Activated CD4-positive, alpha-beta memory T cell treated with anti-CD3 and anti-CD28 coated beads for 36 hours (primary cell): ENCODE measurements at regions of chr10 and their contacts with region 1.

Region 1: DNA sequence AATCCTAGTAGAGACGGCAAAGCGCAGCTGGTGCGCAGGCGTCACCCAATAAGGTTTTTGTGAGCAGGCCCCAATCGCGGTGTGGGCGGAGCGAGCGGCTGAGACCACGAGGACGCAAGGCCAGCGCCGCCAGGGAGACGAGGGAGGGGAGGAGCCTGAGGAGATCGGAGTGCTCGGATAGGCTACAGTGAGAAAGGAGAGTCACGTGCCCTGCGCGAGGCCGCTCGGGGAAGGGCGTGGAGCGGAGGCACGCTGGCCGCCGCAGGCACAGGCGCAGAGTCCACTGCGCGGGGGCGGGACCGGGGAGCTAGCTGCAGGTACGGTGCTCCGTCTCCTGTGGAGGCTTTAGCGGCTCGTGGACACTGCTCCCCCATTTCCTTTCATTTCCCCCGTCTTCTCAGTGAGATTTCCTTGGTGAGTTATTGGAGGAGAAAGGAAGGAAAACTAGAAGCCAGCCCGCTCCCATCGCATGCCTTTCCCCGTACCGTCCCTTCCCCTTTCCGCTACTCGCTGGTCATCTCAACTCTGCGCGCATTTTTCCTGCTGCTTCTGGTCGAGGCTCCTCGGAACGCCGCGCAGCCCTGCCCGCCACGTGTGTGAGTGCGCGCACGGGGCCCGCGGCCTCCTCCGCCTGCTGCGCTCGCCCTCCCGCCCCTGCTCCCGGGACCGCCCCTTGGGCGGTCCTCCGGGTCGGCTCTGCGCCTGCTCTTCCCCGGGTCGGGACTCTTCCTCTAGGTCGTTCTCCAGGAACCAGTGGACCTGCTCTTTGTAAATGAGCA is at the start of gene THNSL1:
- DNase-seq: peak; percentile 99
- H3K4me3 Mint-ChIP-seq: peak within 1 kb of the TSS; percentile 94
- H3K27ac Mint-ChIP-seq: peak within 1 kb of the TSS; percentile 97
- H3K4me1 Mint-ChIP-seq: peaks cover 19% of the 10 kb centered on the region
- H3K27me3 Mint-ChIP-seq: no peaks in the 10 kb centered on the region
- total RNA-seq, gene THNSL1: 6.0 to 6.2 TPM

Region 2: DNA sequence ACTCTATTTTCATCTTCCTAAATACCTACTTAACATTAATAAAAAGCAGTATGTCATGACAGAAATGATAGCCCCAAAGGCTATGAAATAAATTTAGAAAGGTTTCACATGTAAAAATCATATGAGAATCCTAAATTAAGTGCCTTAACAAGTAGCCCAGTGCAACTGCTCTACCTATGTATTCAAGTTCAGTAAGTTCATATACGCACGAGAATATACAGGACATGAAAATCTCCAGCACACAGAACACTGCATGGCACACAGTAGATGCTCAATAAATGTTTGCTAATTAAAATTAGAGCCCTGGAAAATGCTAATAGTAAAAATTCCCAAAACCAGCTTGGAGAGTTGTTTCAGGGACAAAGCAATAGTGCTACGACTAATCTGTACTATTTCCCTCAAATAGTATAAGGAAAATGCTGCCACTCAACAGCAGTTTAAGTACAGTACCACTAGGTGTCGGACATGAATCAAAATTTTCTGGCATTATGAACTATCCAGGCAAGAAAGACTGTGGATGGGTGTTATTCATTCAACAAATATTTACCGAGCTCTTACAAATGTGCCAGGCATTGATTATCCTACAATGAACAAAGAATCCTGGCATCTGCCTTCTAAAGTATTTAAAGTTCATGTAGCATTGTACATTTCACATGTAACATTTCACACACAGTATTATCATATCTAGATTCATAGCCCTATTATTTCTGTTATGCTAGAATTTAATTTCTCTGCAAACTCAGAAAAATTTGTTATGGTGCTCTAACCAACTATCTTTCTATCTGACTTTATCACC is 373.7 kb before region 1 on chr10:
- CTCF ChIA-PET with region 1: no interaction called
- POLR2A ChIA-PET with region 1: no interaction called
- intact Hi-C with region 1: loop called (anchors 1 kb)
- DNase-seq: no peak
- H3K4me3 Mint-ChIP-seq: no peak overlapping the region
- H3K27ac Mint-ChIP-seq: no peak overlapping the region
- H3K4me1 Mint-ChIP-seq: no peaks in the 10 kb centered on the region
- H3K27me3 Mint-ChIP-seq: no peaks in the 10 kb centered on the region

Region 3: DNA sequence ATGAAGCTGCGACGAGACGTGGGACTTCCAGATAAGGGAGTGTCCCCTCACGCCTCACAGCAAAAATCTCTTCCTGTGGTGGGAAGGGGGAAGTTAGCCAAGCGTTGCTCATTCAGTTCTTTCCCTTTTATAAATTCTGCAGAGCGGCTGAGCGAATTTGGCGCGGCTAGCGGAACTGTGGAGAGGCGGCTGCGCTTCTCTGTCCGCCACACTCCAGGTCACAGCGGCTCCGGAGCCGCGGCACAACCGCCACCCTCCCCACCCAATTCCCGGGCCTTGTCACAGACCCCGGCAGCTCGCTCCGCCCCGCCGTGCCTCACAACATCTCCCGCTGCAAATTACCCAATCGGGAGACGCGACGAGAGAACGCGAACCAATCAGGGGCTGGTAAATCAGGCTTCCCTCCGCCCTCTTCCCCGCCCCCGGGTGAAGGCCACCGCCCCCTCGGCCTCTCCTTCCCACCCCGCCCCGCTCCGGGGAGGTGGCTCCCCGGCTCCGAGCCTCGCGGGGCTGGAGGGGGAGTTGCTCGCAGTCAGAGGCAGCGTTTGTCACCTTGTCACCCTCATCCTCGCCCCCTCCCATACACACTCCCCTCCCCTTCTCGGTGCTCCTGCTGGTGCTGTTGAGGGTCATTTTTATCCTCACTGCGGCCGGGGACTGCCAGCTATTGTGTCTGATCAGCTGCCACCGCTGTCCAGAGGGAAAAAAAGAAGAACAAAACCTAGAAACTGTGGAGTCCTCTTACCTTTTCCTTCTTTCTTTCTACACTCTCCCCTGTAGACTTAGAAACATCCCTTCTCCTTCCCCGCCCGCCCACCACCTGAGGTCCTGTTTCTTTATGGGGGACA is 292.0 kb before region 1 on chr10:
- CTCF ChIA-PET with region 1: no interaction called
- POLR2A ChIA-PET with region 1: interaction called, 10 read pairs
- intact Hi-C with region 1: loop called (anchors 1 kb)
- DNase-seq: peak; percentile 97
- H3K4me3 Mint-ChIP-seq: peak overlapping the region; percentile 88
- H3K27ac Mint-ChIP-seq: peak overlapping the region; percentile 93
- H3K4me1 Mint-ChIP-seq: peaks cover 19% of the 10 kb centered on the region
- H3K27me3 Mint-ChIP-seq: no peaks in the 10 kb centered on the region

Region 4: DNA sequence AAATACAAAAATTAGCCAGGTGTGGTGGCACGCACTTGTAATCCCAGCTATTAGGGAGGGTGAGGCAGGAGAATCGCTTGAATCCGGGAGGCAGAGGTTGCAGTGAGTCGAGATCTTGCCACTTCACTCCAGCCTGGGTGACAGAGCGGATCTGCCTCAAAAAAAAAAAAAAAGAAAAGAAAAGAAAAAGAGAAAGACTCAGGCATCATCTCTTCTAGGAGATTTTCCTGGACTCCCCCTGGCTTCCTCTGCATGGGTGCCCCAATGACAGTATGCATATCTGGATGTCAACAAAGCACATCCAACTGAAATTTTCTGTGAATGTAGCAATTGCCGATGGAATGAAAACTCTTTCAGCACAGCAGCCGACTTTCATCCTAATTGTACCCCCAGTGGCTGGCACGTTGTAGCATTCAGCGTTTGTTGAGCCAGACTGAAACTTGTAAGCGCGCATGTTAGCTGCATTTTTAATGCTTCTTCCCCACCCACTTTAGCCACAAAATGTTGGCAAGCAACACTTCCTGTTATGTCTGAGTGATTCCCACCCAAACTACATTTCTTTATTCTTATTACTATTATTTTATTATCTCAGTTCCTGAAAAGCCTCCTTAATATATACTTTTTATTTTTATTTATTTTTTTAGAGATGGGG is 134.4 kb before region 1 on chr10:
- CTCF ChIA-PET with region 1: no interaction called
- POLR2A ChIA-PET with region 1: no interaction called
- intact Hi-C with region 1: loop called (anchors 5 kb)
- DNase-seq: peak; percentile 66
- H3K4me3 Mint-ChIP-seq: peak overlapping the region; percentile 57
- H3K27ac Mint-ChIP-seq: peak overlapping the region; percentile 62
- H3K4me1 Mint-ChIP-seq: peaks cover 30% of the 10 kb centered on the region
- H3K27me3 Mint-ChIP-seq: no peaks in the 10 kb centered on the region

Region 5: GRCh38 chr10:24952707-24953645 is 63.6 kb before region 1 on chr10:
- CTCF ChIA-PET with region 1: no interaction called
- POLR2A ChIA-PET with region 1: no interaction called
- intact Hi-C with region 1: loop called (anchors 2 kb)
- DNase-seq: peak; percentile 48
- H3K4me3 Mint-ChIP-seq: peak overlapping the region; percentile 66
- H3K27ac Mint-ChIP-seq: no peak overlapping the region
- H3K4me1 Mint-ChIP-seq: peaks cover 21% of the 10 kb centered on the region
- H3K27me3 Mint-ChIP-seq: peaks cover 4% of the 10 kb centered on the region

Region 6: DNA sequence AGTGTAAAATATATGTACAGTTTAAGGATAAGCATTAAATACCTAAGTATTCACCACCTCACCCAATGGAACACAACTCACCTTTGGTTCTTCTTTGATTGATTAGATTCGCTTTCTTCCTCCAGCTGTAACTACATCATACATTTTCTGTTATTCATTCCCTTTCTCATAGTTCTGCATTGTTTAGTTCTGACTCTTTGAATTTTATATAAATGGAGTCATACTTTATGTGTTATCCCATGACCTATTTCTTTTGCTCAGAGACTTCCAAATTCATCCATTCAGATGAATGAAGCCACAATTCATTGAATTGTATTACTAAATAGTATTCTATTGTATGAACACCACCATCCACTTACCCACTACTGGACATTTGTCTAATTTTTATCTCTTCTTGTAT is 12.1 kb after region 1 on chr10:
- CTCF ChIA-PET with region 1: no interaction called
- POLR2A ChIA-PET with region 1: no interaction called
- intact Hi-C with region 1: no loop called
- DNase-seq: no peak
- H3K4me3 Mint-ChIP-seq: no peak overlapping the region
- H3K27ac Mint-ChIP-seq: no peak overlapping the region
- H3K4me1 Mint-ChIP-seq: no peaks in the 10 kb centered on the region
- H3K27me3 Mint-ChIP-seq: no peaks in the 10 kb centered on the region

Region 7: DNA sequence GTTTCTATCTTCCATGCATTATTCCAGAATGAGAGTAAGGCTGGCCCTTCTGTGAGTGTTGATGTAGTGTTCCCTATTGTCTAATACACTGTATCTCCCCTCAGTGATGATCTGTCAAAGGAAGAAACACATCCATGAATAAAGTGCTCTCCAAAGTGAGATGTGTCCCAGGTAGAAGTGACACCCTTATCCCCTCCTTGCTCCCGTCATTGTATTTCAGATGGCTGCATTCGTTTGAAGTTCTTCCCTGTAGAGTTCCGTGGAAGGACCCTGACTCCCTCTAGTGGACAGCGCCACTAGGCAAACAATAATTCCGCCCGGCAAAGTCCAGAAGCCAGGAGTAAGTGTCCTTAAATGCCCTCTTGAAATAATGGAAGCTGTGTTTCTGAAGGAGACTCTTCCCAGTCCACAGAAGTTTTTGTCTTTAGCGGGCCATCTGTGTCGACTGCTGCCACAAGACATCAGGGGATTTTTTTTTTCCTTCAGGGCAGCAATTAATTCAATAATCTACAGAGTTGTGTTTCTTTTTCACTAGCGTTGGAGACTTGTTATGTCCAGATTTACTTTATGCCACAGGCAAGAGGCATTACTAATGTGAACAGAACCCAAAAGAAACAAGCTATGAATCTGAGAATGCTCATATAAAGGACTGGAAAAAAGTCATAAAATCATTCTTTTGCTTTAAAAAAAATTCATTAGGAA is 64.5 kb after region 1 on chr10:
- CTCF ChIA-PET with region 1: no interaction called
- POLR2A ChIA-PET with region 1: no interaction called
- intact Hi-C with region 1: loop called (anchors 1 kb)
- DNase-seq: peak; percentile 72
- H3K4me3 Mint-ChIP-seq: no peak overlapping the region
- H3K27ac Mint-ChIP-seq: no peak overlapping the region
- H3K4me1 Mint-ChIP-seq: peaks cover 9% of the 10 kb centered on the region
- H3K27me3 Mint-ChIP-seq: peaks cover 5% of the 10 kb centered on the region